ENCODE measurements at regions of chr18 and their contacts with region 1.

Region 1: DNA sequence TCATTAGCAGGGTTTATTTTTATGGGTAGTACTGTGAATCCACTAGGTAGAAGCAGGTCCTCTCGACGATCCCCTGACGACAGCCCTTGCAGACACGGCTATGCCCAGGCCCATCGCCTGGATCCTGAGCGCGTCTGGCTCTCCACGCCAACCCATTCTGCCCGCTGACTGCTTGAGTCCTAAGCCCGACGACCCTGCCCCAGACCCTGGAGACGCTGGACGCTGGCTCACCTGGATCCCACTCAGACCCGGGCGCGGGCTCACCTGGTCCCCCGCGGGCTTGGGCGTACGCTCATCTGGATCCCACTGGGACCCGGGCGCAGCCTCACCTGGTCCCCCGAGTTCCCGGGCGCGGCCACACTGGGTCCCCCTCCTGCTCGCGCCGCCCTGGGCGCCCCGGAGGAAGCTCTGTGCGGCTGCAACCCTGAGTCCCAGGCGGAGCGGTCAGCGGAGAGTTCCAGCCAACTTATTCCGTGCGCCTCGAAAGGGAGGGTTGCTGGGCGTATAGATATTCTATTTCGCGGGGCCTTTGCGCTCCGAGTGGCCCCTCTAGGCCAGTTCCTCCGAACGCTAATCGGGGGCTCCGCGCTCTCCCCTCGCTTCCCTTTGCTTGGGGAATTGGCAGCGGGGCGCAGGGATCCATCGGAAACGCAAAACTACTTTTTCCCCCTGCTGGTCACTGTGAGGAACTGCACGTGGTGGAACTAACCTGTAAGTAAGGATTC is 22.4 kb upstream of the RMP24 start:
- DNase-seq: no peak
- ATAC-seq: peak; percentile 91
- H3K4me3 ChIP-seq: peak overlapping the region; percentile 23 to 33
- H3K27ac ChIP-seq: no peak overlapping the region
- H3K4me1 ChIP-seq: no peaks in the 10 kb centered on the region
- H3K27me3 ChIP-seq: no peaks in the 10 kb centered on the region
- CTCF ChIP-seq: peak; percentile 54 to 89 (median 84); a peak in 5 of 6 replicates
- POLR2A ChIP-seq: no peak
- RAD21 ChIP-seq: peak; percentile 50

Region 2: GRCh38 chr18:35756506-35757117 is 193.5 kb before region 1 on chr18:
- CTCF ChIA-PET with region 1: interaction called, 7 read pairs
- POLR2A ChIA-PET with region 1: no interaction called
- RAD21 ChIA-PET with region 1: no interaction called
- intact Hi-C with region 1: loop called (anchors 1 kb)
- DNase-seq: peak; percentile 40
- ATAC-seq: peak; percentile 85
- H3K4me3 ChIP-seq: no peak overlapping the region
- H3K27ac ChIP-seq: no peak overlapping the region
- H3K4me1 ChIP-seq: no peaks in the 10 kb centered on the region
- H3K27me3 ChIP-seq: no peaks in the 10 kb centered on the region; the same call in 1 of the 2 replicates
- CTCF ChIP-seq: peak; percentile 55 to 88 (median 77); a peak in 5 of 6 replicates
- POLR2A ChIP-seq: no peak
- RAD21 ChIP-seq: peak; percentile 91

Region 3: GRCh38 chr18:35917044-35917443 is 33.0 kb before region 1 on chr18:
- CTCF ChIA-PET with region 1: interaction called, 3 read pairs
- POLR2A ChIA-PET with region 1: no interaction called
- RAD21 ChIA-PET with region 1: no interaction called
- intact Hi-C with region 1: loop called (anchors 1 kb)
- DNase-seq: no peak
- ATAC-seq: peak; percentile 54
- H3K4me3 ChIP-seq: no peak overlapping the region
- H3K27ac ChIP-seq: no peak overlapping the region
- H3K4me1 ChIP-seq: no peaks in the 10 kb centered on the region
- H3K27me3 ChIP-seq: 0 out of 2 replicates have a peak, but pooled peaks cover 9% of the 10 kb centered on the region
- CTCF ChIP-seq: peak; percentile 34 to 49 (median 35); a peak in 4 of 6 replicates
- POLR2A ChIP-seq: no peak
- RAD21 ChIP-seq: peak; percentile 59

Region 4: GRCh38 chr18:35938158-35938557 is 11.9 kb before region 1 on chr18:
- CTCF ChIA-PET with region 1: interaction called, 15 read pairs
- POLR2A ChIA-PET with region 1: no interaction called
- RAD21 ChIA-PET with region 1: no interaction called
- intact Hi-C with region 1: no loop called
- DNase-seq: no peak
- ATAC-seq: no peak
- H3K4me3 ChIP-seq: no peak overlapping the region
- H3K27ac ChIP-seq: no peak overlapping the region
- H3K4me1 ChIP-seq: no peaks in the 10 kb centered on the region
- H3K27me3 ChIP-seq: no peaks in the 10 kb centered on the region
- CTCF ChIP-seq: no peak
- POLR2A ChIP-seq: no peak
- RAD21 ChIP-seq: no peak